GM12878 (cell line): ENCODE measurements at regions of chr6 and their contacts with region 1.

Region 1: DNA sequence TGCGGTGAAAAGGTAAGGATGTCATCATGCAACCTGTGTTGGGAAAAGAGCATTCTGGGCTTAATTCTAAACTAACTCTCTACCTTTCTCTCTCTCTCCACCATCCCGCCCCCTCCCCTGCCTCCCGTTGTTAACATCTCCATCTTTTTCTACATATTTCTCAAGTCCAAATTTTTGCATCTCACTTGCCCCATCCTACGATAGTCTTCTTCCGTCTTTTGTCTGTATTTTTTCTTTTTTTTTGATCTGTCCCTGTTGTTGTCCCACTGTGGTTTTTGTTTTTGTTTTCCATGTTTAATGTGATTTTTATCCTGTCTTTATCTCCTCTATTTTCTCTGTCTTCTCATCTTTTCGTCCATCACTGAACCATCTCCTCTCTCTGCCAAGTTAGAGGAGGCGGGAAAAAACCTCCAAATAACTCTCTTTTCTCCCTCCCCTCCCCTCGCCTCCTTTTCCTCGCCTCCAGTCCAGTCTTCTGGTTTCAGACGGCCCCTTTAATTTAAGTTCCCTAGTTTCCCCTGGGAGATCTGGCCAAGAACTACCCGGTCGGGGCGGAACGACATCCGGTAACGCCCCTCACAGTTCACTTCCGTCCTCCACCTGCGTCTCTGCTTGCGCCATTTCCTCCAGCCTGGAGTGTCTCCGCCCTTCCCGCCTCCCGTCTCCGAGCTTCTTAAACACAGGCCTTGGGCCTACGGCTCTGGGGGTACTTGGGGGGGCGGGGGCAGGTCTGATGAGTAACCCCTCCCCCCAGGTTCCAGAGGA is at the start of gene NFKBIL1:
- DNase-seq: peak; percentile 89
- ATAC-seq: peak; percentile 88
- H3K4me3 ChIP-seq: peak within 1 kb of the TSS; percentile 72
- H3K27ac ChIP-seq: peak within 1 kb of the TSS; percentile 64
- H3K4me1 ChIP-seq: peaks cover 23% of the 10 kb centered on the region; the same call in 1 of the 2 replicates
- H3K27me3 ChIP-seq: no peaks in the 10 kb centered on the region
- CTCF ChIP-seq: no peak
- EP300 ChIP-seq: 0 out of 4 replicates have a peak, but pooled peaks of 1 of the 2 experiments have one; percentile 20
- POLR2A ChIP-seq: peak; percentile 69
- RAD21 ChIP-seq: no peak
- polyA plus RNA-seq, gene NFKBIL1: 0.19 to 0.64 TPM

Region 2: GRCh38 chr6:31493875-31494694 is 53.1 kb before region 1 on chr6:
- CTCF ChIA-PET with region 1: interaction called, 100 read pairs
- POLR2A ChIA-PET with region 1: interaction called, 56 read pairs
- RAD21 ChIA-PET with region 1: interaction called, 72 read pairs
- SMC1A ChIA-PET with region 1: interaction called, 63 read pairs
- in situ Hi-C with region 1: loop called (anchors 5 kb)
- intact Hi-C with region 1: no loop called
- DNase-seq: peak; percentile 34
- ATAC-seq: peak; percentile 73
- H3K4me3 ChIP-seq: peak overlapping the region; percentile 76
- H3K27ac ChIP-seq: peak overlapping the region; percentile 65
- H3K4me1 ChIP-seq: 0 out of 2 replicates have a peak, but pooled peaks cover 2% of the 10 kb centered on the region
- H3K27me3 ChIP-seq: no peaks in the 10 kb centered on the region
- CTCF ChIP-seq: peak; percentile 72 to 94 (median 85)
- EP300 ChIP-seq: no peak
- POLR2A ChIP-seq: 0 out of 2 replicates have a peak, but pooled peaks have one; percentile 23
- RAD21 ChIP-seq: peak; percentile 72

Region 3: DNA sequence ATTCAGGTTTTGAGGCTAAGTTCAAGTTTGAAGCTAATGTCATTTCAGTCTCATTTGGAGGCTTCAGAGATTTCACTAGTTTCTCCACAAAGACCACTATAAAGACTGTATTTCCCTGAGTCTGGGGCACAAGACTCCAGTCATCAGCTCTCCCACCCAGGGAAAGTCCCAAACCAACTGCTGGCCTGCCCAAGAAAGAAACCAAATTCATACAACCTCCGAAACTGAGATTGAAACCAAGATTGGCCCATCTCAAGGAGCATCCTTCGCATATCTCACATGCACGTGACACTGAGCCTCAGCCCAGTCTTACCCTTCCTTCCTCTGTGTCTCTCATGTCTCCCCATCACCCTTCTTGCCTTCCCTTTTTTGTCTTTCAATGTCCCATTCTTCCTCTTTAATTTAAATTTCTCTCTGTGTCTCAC is 21.4 kb after region 1 on chr6:
- CTCF ChIA-PET with region 1: interaction called, 2,098 read pairs
- POLR2A ChIA-PET with region 1: interaction called, 139 read pairs
- RAD21 ChIA-PET with region 1: interaction called, 620 read pairs
- SMC1A ChIA-PET with region 1: interaction called, 1,989 read pairs
- in situ Hi-C with region 1: no loop called
- intact Hi-C with region 1: no loop called
- DNase-seq: peak; percentile 94
- ATAC-seq: peak; percentile 77
- H3K4me3 ChIP-seq: peak overlapping the region; percentile 41; the same call in 1 of the 2 replicates
- H3K27ac ChIP-seq: peak overlapping the region; percentile 90
- H3K4me1 ChIP-seq: peaks cover 64% of the 10 kb centered on the region
- H3K27me3 ChIP-seq: no peaks in the 10 kb centered on the region
- CTCF ChIP-seq: no peak
- EP300 ChIP-seq: peak; percentile 54 to 69; a peak in 2 of 4 replicates
- POLR2A ChIP-seq: no peak
- RAD21 ChIP-seq: no peak

Region 4: DNA sequence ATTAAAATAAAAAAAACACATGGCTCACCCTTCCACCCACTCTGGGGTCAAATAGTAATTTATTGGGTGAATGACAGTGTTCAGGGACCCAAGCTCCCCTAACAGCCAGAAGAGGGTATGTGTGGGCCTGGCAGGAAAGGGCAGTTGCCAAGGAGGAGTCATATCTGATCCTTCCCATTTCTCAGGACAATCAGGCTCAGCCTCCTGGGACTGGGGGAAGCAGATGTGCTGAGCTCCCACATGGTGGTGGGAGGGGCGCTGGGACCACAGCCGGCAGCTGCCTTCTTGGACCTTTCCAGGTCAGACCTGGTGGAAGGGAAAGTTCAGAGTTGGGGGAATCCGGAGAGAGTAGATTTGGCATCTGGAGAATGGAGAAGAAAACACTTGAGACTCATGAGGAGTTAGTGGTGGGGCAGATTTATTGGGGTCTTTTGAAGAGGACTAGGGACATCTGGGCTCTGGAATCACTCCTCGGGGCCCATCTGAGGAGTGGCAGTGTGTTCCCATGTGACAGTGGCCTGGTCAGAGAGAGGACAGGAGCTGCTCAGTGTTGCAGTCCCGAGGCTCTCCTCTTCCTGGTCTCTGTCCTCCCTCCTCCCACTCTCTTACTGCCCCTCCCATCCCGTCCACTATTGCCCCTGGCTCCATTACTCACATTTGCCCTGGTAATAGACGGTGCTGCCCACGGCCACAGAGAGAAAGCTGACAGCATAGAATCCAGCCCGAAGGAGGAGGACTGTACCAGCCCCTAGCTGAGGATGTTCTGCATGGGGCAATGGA is 41.9 kb after region 1 on chr6:
- CTCF ChIA-PET with region 1: interaction called, 2,098 read pairs
- POLR2A ChIA-PET with region 1: interaction called, 164 read pairs
- RAD21 ChIA-PET with region 1: interaction called, 668 read pairs
- SMC1A ChIA-PET with region 1: interaction called, 1,989 read pairs
- in situ Hi-C with region 1: no loop called
- intact Hi-C with region 1: no loop called
- DNase-seq: no peak
- ATAC-seq: no peak
- H3K4me3 ChIP-seq: no peak overlapping the region
- H3K27ac ChIP-seq: no peak overlapping the region; the same call in 1 of the 2 replicates
- H3K4me1 ChIP-seq: peaks cover 55% of the 10 kb centered on the region
- H3K27me3 ChIP-seq: no peaks in the 10 kb centered on the region
- CTCF ChIP-seq: no peak
- EP300 ChIP-seq: no peak
- POLR2A ChIP-seq: no peak
- RAD21 ChIP-seq: no peak

Region 5: DNA sequence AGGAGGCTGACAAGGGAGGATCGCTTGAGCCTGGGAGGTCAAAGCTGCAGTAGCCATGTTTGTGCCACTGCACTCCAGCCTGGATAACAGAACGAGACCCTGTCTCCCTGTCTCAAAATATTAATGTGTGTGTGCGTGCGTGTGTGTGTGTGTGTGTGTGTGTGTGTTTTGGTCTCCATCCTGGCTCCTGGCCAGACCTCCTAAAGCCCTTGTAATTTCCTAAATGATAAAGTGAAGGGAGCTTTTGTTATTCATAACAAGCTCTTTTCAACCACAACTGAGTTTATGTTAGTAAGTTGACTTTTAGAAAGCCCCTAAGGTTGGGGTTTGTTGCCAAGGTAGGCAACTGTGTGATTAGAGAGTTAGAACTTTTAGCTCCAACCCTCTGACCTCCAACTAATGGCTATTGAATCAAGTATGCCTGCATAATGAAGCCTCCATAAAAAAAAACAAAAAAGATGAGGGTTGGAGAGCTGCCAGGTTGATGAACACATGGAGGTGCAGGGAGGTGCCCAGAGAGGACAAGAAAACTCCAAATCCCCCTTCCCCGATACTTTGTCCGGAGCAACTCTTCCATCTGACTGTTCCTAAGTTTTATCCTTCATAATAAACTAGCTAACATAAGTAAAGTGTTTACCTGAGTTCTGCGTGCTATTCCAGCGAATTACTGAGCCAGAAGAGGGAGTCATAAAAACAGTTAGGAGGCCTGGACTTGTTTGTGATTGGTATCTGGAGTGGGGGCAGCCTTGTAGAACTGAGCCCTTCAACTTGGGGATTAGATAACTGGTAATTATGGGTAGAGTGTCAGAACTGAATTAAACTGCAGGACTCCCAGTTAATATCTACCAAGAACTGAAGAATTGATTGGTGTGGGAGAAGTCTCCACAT is 62.6 kb after region 1 on chr6:
- CTCF ChIA-PET with region 1: interaction called, 17 read pairs
- POLR2A ChIA-PET with region 1: interaction called, 9 read pairs
- RAD21 ChIA-PET with region 1: interaction called, 8 read pairs
- SMC1A ChIA-PET with region 1: interaction called, 1,989 read pairs
- in situ Hi-C with region 1: no loop called
- intact Hi-C with region 1: no loop called
- DNase-seq: no peak
- ATAC-seq: no peak
- H3K4me3 ChIP-seq: no peak overlapping the region
- H3K27ac ChIP-seq: no peak overlapping the region
- H3K4me1 ChIP-seq: peaks cover 8% of the 10 kb centered on the region
- H3K27me3 ChIP-seq: no peaks in the 10 kb centered on the region
- CTCF ChIP-seq: no peak
- EP300 ChIP-seq: no peak
- POLR2A ChIP-seq: no peak
- RAD21 ChIP-seq: no peak

Region 6: GRCh38 chr6:31652925-31653718 is 106.0 kb after region 1 on chr6:
- CTCF ChIA-PET with region 1: interaction called, 6 read pairs
- POLR2A ChIA-PET with region 1: interaction called, 9 read pairs
- RAD21 ChIA-PET with region 1: interaction called, 6 read pairs
- SMC1A ChIA-PET with region 1: interaction called, 4 read pairs
- in situ Hi-C with region 1: no loop called
- intact Hi-C with region 1: loop called (anchors 2 kb)
- DNase-seq: no peak
- ATAC-seq: peak; percentile 84
- H3K4me3 ChIP-seq: peak overlapping the region; percentile 91
- H3K27ac ChIP-seq: peak overlapping the region; percentile 99
- H3K4me1 ChIP-seq: peaks cover 8% of the 10 kb centered on the region; the same call in 1 of the 2 replicates
- H3K27me3 ChIP-seq: no peaks in the 10 kb centered on the region
- CTCF ChIP-seq: peak in 1 of 3 experiments; percentile 29; a peak in 2 of 6 replicates
- EP300 ChIP-seq: no peak
- POLR2A ChIP-seq: no peak
- RAD21 ChIP-seq: no peak